Dendritic cell treated with granulocyte-macrophage colony-stimulating factor and Interleukin-4, amounts not matched to agents 40 ng/mL and 50 ng/mL, for 4 days (primary cell): ENCODE measurements at regions of chr6 and their contacts with region 1.

Region 1: DNA sequence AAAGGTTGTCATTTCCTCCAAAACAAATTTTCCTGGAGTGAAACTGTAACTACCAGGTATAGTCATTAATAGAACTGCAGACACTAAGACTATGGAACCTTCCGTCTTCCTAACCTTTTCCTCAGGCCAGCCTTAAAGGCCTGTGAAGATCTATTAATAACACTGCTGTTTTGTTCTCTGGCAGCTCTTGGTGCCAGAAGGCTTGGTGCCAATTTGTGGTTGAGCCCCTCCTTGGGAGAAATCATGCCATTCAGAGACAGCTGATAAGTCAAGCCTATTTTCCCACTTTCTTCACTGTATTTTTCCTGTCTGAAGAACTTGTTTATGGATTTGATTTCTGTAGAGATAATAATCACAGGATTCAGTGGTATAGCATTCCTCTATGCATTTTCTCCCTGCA is 64.8 kb downstream of the HCRTR2 start:
- H3K4me3 Mint-ChIP-seq: no peak overlapping the region
- H3K27ac Mint-ChIP-seq: no peak overlapping the region
- H3K4me1 Mint-ChIP-seq: no peaks in the 10 kb centered on the region
- H3K27me3 Mint-ChIP-seq: no peaks in the 10 kb centered on the region

Region 2: DNA sequence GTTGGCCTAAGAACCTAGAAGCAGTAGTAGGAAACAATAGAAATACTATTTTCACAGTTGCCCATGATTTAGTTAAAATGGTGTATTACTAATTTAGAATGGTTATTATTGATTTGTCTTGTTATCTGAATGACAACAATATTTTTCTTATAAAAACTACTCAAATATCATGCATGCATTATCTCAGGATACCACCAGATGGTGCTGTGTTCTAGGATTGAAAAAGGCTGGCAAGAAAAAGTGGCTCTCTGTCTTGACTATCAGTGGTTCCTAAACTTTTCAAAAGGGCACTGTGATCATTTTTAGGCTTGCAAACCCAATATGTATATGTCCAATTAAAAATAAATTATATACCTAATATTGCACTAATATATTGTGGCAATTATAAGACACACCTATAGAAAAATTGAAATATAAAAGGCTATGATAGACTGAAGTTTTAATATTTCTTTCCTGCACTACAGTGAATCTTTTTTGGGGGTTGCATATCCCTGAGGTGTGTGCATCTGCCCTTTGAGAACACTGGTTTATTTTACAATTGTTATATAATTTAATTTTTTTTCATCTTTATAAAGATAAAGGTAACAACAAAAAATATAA is 1259.5 kb before region 1 on chr6:
- intact Hi-C with region 1: loop called (anchors 5 kb)
- H3K4me3 Mint-ChIP-seq: no peak overlapping the region
- H3K27ac Mint-ChIP-seq: no peak overlapping the region
- H3K4me1 Mint-ChIP-seq: no peaks in the 10 kb centered on the region
- H3K27me3 Mint-ChIP-seq: no peaks in the 10 kb centered on the region

Region 3: DNA sequence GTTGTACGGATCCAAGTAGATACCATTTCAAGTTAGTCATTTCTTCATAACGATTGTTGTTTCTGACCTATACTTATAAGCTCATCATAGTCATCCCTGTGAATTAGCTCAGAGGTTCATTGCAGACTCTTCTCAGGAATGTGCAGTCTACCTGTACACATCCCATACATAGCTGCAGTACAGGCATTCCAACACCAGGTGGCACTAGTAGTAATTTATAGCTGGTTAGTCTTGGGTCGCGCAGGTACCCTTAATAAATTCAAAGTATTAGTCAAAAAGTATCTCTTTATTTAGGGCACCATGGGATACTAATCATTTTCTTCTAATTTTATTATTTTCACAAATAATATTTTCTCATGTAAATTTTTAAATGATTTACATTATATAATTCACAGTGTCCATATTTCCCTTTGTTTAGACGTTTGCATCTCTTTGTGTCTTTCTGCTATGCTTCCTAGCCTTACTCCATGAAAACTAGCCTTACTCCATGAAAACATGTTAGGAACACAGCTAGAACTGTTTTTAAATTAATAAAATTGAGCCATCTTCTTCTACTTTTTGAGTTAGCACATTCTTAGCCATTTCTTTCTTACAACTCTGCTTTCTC is 521.1 kb before region 1 on chr6:
- intact Hi-C with region 1: loop called (anchors 5 kb)
- H3K4me3 Mint-ChIP-seq: no peak overlapping the region
- H3K27ac Mint-ChIP-seq: no peak overlapping the region
- H3K4me1 Mint-ChIP-seq: no peaks in the 10 kb centered on the region
- H3K27me3 Mint-ChIP-seq: no peaks in the 10 kb centered on the region

Region 4: DNA sequence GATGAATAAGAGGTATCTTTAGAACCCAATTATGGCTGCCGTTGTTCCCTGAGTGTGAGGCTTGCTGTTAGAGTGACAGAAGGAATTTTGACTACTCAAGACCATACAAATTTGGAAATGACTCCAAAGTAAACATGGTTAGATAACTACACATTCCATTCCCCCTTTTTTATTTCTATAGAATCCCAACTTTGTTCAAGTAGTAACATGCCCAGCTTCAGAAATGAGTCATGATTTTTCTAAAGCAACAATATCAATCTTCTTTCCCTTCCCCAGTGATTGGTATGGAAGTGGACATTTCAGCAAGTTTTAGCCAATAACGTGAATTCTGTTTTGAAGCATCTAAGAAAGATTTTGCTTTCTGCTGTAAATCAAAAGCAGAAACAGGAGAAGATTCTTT is 26.9 kb before region 1 on chr6:
- intact Hi-C with region 1: no loop called
- H3K4me3 Mint-ChIP-seq: no peak overlapping the region
- H3K27ac Mint-ChIP-seq: no peak overlapping the region
- H3K4me1 Mint-ChIP-seq: no peaks in the 10 kb centered on the region
- H3K27me3 Mint-ChIP-seq: no peaks in the 10 kb centered on the region